PC-3 (cell line): ENCODE measurements at regions of chr11 and their contacts with region 1.

Region 1: GRCh38 chr11:64971421-64972233 is at the start of gene MAJIN:
- DNase-seq: peak; percentile 30
- ATAC-seq: no peak
- H3K4me3 ChIP-seq: no peak within 1 kb of the TSS
- H3K27ac ChIP-seq: peak within 1 kb of the TSS; percentile 44
- H3K4me1 ChIP-seq: peaks cover 24% of the 10 kb centered on the region
- H3K27me3 ChIP-seq: no peaks in the 10 kb centered on the region
- CTCF ChIP-seq: no peak
- total RNA-seq, gene MAJIN: not detected in 2 replicates

Region 2: DNA sequence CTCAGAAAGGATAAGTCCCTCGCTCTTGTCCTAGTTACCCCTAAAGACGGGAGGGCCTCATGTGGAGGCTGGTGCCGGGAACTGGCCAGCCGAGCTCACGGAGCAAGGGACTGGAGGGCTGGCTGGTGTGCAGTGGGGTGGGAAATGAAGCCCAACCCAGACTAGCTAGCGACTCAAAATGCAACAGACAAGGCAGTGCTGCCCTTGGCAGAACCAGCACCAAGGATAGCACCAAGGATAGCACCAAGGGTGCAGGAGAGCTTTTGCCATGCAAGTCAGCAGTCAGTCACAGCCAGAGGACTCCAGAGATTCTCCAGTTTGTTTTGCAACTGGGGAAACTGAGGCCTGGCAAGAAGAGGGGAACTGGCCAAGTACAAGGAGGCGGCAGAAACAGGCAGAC is 31.7 kb after region 1 on chr11:
- CTCF ChIA-PET with region 1: no interaction called
- POLR2A ChIA-PET with region 1: interaction called, 11 read pairs
- intact Hi-C with region 1: loop called (anchors 2 kb)
- DNase-seq: peak; percentile 33
- ATAC-seq: no peak
- H3K4me3 ChIP-seq: no peak overlapping the region
- H3K27ac ChIP-seq: no peak overlapping the region
- H3K4me1 ChIP-seq: peaks cover 14% of the 10 kb centered on the region
- H3K27me3 ChIP-seq: no peaks in the 10 kb centered on the region
- CTCF ChIP-seq: no peak